ENCODE measurements at regions of chr17 and their contacts with region 1.

Region 1: GRCh38 chr17:5237541-5238016 is 2.9 kb upstream of the SCIMP start:
- DNase-seq: peak; percentile 43 to 83 (median 64)
- H3K4me3 ChIP-seq: no peak overlapping the region
- H3K27ac ChIP-seq: no peak overlapping the region
- H3K4me1 ChIP-seq: no peaks in the 10 kb centered on the region
- H3K27me3 ChIP-seq: no peaks in the 10 kb centered on the region
- CTCF ChIP-seq: peak; percentile 43 to 73 (median 66)
- POLR2A ChIP-seq: no peak

Region 2: GRCh38 chr17:4789901-4790704 is 447.5 kb before region 1 on chr17:
- intact Hi-C with region 1: no loop called
- DNase-seq: peak; percentile 83 to 90 (median 85)
- H3K4me3 ChIP-seq: peak overlapping the region in 3 of 4 donors; percentile 15 to 57 (median 44)
- H3K27ac ChIP-seq: peak overlapping the region; percentile 78 to 98 (median 96)
- H3K4me1 ChIP-seq: peaks cover 4 to 44% of the 10 kb centered on the region in 2 donors
- H3K27me3 ChIP-seq: peaks cover 6% of the 10 kb centered on the region
- CTCF ChIP-seq: peak; percentile 34 to 96 (median 68)
- POLR2A ChIP-seq: peak; percentile 87 to 92

Region 3: GRCh38 chr17:4986951-4987766 is 250.4 kb before region 1 on chr17 and contains the start of gene CAMTA2:
- intact Hi-C with region 1: no loop called
- DNase-seq: peak; percentile 81 to 91 (median 86)
- H3K4me3 ChIP-seq: peak within 1 kb of the TSS; percentile 25 to 93 (median 66)
- H3K27ac ChIP-seq: peak within 1 kb of the TSS; percentile 15 to 95 (median 89)
- H3K4me1 ChIP-seq: peaks cover 13 to 24% of the 10 kb centered on the region in 2 donors
- H3K27me3 ChIP-seq: no peaks in the 10 kb centered on the region
- CTCF ChIP-seq: peak; percentile 27 to 70 (median 62)
- POLR2A ChIP-seq: peak; percentile 47 to 58
- total RNA-seq, gene CAMTA2: 6.9 to 70.6 (median 22.7) TPM

Region 4: GRCh38 chr17:5198472-5198871 is 39.1 kb before region 1 on chr17:
- intact Hi-C with region 1: loop called in 1 of 2 experiments (anchors 5 kb)
- DNase-seq: no peak
- H3K4me3 ChIP-seq: no peak overlapping the region
- H3K27ac ChIP-seq: no peak overlapping the region
- H3K4me1 ChIP-seq: peaks cover 0 to 5% of the 10 kb centered on the region in 2 donors
- H3K27me3 ChIP-seq: no peaks in the 10 kb centered on the region
- CTCF ChIP-seq: no peak
- POLR2A ChIP-seq: no peak

Region 5: DNA sequence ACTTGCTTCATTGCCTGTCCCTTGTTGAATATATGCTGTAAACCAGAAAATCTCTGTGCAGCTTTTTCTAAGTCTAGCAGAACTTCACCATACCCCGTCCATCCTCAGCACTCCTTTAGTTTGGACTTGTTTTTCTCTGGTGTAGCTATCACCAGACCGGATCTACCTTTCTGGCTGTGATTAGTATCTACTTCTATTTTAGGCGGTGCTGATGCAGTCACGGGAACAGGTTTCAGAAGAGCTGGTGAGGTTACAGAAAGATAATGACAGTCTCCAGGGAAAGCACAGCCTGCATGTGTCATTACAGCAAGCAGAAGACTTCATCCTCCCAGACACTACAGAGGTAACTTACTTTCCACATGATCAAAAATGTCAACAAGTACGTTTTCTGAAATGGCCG is 135.5 kb after region 1 on chr17:
- intact Hi-C with region 1: no loop called
- DNase-seq: no peak
- H3K4me3 ChIP-seq: no peak overlapping the region
- H3K27ac ChIP-seq: no peak overlapping the region
- H3K4me1 ChIP-seq: no peaks in the 10 kb centered on the region
- H3K27me3 ChIP-seq: no peaks in the 10 kb centered on the region
- CTCF ChIP-seq: no peak
- POLR2A ChIP-seq: no peak